HEK293 (cell line): ENCODE measurements at regions of chr10 and their contacts with region 1.

Region 1: GRCh38 chr10:119445311-119445934 is 97.1 kb downstream of the RGS10 start:
- H3K4me3 ChIP-seq: no peak overlapping the region
- H3K27ac ChIP-seq: 0 out of 2 replicates have a peak overlapping the region, but pooled peaks have one; percentile 4
- H3K4me1 ChIP-seq: no peaks in the 10 kb centered on the region
- CTCF ChIP-seq: peak; percentile 86

Region 2: DNA sequence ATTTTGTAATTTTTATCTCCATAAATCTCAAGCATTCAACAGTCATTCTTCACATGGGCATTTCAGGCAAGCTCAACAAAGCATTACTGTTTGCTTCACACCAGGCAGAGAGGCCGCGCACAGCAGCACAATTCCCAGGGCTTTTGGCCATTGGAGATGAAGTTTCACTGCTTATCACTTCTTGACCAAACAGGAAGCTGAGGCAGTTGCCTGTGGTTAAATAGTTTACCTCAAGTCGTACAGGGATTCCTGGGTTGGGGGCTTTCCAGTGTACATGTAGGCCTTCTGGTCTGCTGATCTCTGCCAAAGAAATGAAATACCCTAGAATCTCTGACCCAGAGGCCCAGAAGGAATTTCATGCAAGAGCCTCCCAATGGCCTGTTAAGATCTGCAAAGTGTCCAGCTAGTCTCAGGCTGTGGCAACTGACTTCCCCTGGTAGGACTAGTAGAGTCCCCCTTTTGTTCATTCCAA is 255.6 kb before region 1 on chr10:
- CTCF ChIA-PET with region 1: interaction called, 11 read pairs
- POLR2A ChIA-PET with region 1: no interaction called
- H3K4me3 ChIP-seq: no peak overlapping the region
- H3K27ac ChIP-seq: no peak overlapping the region
- H3K4me1 ChIP-seq: no peaks in the 10 kb centered on the region
- CTCF ChIP-seq: no peak

Region 3: GRCh38 chr10:119199231-119199992 is 246.0 kb before region 1 on chr10:
- CTCF ChIA-PET with region 1: interaction called, 64 read pairs
- POLR2A ChIA-PET with region 1: interaction called, 8 read pairs
- H3K4me3 ChIP-seq: no peak overlapping the region
- H3K27ac ChIP-seq: no peak overlapping the region
- H3K4me1 ChIP-seq: no peaks in the 10 kb centered on the region
- CTCF ChIP-seq: peak; percentile 87

Region 4: GRCh38 chr10:119207367-119207668 is 238.1 kb before region 1 on chr10 and contains the start of gene GRK5:
- CTCF ChIA-PET with region 1: interaction called, 45 read pairs
- POLR2A ChIA-PET with region 1: no interaction called
- H3K4me3 ChIP-seq: peak within 1 kb of the TSS; percentile 73
- H3K27ac ChIP-seq: peak within 1 kb of the TSS; percentile 90
- H3K4me1 ChIP-seq: peaks cover 31% of the 10 kb centered on the region
- CTCF ChIP-seq: no peak

Region 5: DNA sequence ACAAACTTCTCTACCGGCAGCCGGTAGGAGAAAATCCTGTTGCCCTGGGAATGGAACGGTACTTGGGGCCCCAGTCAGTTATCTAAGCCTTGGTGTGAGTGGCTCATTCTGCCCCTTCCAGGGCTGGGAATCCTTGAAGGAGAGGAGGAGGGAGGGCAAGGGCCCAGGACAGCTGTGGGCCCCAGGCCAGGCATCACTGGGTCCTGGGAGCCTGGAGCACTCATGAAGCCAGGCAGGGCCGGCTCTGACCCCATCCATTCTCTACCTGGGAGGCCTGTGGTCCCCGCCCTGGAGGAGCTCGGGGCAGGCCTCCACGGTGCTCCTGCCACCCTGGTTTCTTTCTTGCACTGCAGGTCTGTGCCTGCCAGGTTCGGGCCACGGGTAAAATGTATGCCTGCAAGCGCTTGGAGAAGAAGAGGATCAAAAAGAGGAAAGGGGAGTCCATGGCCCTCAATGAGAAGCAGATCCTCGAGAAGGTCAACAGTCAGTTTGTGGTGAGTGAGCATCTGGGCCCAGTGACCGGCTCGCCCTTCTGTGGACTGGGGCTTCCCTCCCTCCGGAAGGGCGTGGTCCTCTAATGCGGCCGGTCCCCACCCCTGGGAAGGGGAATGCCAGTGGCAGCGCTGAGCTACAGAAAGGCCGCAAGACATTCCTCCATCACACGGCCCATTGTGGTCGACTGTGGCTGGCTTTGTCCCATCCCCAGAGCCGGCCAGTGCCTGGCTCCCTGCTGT is 14.2 kb before region 1 on chr10:
- CTCF ChIA-PET with region 1: interaction called, 15 read pairs
- POLR2A ChIA-PET with region 1: no interaction called
- H3K4me3 ChIP-seq: no peak overlapping the region
- H3K27ac ChIP-seq: no peak overlapping the region
- H3K4me1 ChIP-seq: no peaks in the 10 kb centered on the region
- CTCF ChIP-seq: no peak

Region 6: GRCh38 chr10:119456435-119456810 is 11.0 kb after region 1 on chr10:
- CTCF ChIA-PET with region 1: interaction called, 13 read pairs
- POLR2A ChIA-PET with region 1: interaction called, 3 read pairs
- H3K4me3 ChIP-seq: no peak overlapping the region
- H3K27ac ChIP-seq: no peak overlapping the region
- H3K4me1 ChIP-seq: no peaks in the 10 kb centered on the region
- CTCF ChIP-seq: no peak